ENCODE measurements at regions of chr20 and their contacts with region 1.

Region 1: GRCh38 chr20:48620519-48621254 is 207.1 kb downstream of the PREX1 start:
- DNase-seq: peak; percentile 78
- ATAC-seq: peak; percentile 83
- H3K4me3 Mint-ChIP-seq: peak overlapping the region; percentile 20
- H3K27ac Mint-ChIP-seq: peak overlapping the region; percentile 45
- H3K4me1 Mint-ChIP-seq: peaks cover 17% of the 10 kb centered on the region
- H3K27me3 Mint-ChIP-seq: no peaks in the 10 kb centered on the region

Region 2: GRCh38 chr20:47663333-47664067 is 957.2 kb before region 1 on chr20:
- CTCF ChIA-PET with region 1: interaction called, 19 read pairs
- DNase-seq: peak; percentile 85
- ATAC-seq: peak; percentile 78
- H3K4me3 Mint-ChIP-seq: no peak overlapping the region
- H3K27ac Mint-ChIP-seq: peak overlapping the region; percentile 29
- H3K4me1 Mint-ChIP-seq: peaks cover 8% of the 10 kb centered on the region
- H3K27me3 Mint-ChIP-seq: no peaks in the 10 kb centered on the region

Region 3: GRCh38 chr20:47677635-47678453 is 942.8 kb before region 1 on chr20:
- CTCF ChIA-PET with region 1: interaction called, 31 read pairs
- DNase-seq: peak; percentile 65
- ATAC-seq: peak; percentile 71
- H3K4me3 Mint-ChIP-seq: no peak overlapping the region
- H3K27ac Mint-ChIP-seq: no peak overlapping the region
- H3K4me1 Mint-ChIP-seq: no peaks in the 10 kb centered on the region
- H3K27me3 Mint-ChIP-seq: no peaks in the 10 kb centered on the region

Region 4: GRCh38 chr20:47725248-47725973 is 895.3 kb before region 1 on chr20:
- CTCF ChIA-PET with region 1: interaction called, 38 read pairs
- DNase-seq: peak; percentile 90
- ATAC-seq: peak; percentile 57
- H3K4me3 Mint-ChIP-seq: no peak overlapping the region
- H3K27ac Mint-ChIP-seq: peak overlapping the region; percentile 44
- H3K4me1 Mint-ChIP-seq: peaks cover 45% of the 10 kb centered on the region
- H3K27me3 Mint-ChIP-seq: no peaks in the 10 kb centered on the region

Region 5: GRCh38 chr20:48722737-48723191 is 102.1 kb after region 1 on chr20:
- CTCF ChIA-PET with region 1: no interaction called
- DNase-seq: peak; percentile 52
- ATAC-seq: peak; percentile 14
- H3K4me3 Mint-ChIP-seq: no peak overlapping the region
- H3K27ac Mint-ChIP-seq: peak overlapping the region; percentile 80
- H3K4me1 Mint-ChIP-seq: peaks cover 77% of the 10 kb centered on the region
- H3K27me3 Mint-ChIP-seq: no peaks in the 10 kb centered on the region